Common myeloid progenitor, CD34-positive (primary cell): ENCODE measurements at regions of chr3 and their contacts with region 1.

Region 1: DNA sequence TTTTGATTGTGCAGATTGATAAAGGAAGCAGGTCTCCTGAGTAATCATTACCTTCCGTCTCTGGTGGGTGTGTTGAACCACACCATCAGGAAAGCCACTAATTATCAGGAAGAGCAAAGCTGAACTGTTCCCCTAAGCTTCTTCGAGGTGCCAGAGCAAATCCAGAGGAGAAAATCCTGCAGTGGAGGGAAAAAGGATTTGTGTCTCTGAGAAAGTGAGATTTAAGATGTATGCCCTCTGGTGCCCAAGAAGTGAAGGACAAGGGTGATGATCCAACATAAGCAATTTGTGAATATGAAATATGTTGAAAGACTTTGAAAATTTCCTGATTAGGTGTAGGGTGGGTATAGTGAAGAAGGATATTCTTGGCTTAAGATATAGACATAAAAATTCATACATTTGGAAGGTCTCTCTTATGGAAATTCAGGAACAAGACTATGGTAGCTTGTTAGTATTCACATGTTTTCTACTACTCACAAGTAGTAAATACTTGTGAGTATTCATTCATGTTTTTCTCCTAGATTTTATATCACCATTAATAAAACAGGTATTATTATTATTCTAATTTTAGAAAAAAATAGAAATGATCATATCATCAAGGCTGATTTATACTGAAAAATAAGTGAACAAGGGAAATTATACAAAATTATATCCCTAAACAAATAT is 34.8 kb downstream of the COMMD2 start:
- DNase-seq: peak; percentile 61 to 78 (median 72)
- H3K4me3 ChIP-seq: no peak overlapping the region
- H3K27ac ChIP-seq: no peak overlapping the region
- H3K4me1 ChIP-seq: no peaks in the 10 kb centered on the region
- H3K27me3 ChIP-seq: no peaks in the 10 kb centered on the region

Region 2: DNA sequence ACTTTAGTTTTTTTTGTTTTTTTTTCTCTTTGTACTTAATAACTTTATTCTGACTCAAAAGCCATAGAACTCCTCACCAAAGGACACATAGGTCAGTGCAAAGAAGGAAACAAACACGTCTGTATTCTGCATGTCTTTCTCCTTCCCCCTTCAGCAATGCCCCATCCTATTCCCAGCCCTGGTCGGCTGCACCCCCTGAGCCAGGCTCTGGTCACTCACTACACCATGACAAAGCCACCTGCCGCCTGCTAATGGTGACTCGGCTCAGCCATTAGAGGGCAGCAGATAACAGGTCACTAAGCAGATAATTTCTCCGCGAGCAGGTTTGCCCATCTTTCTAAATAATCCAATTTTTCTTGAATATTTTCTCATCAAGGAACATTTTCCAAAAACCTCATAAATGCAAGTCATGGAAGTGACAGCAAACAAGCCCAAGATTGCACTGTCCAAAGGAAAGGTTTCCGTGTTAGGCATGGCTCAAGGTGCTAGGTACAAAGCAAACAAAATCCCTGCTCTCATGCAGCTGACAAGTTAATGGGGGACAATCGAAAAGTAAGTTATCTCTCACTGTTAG is 205.2 kb before region 1 on chr3:
- CTCF ChIA-PET with region 1: interaction called, 17 read pairs
- POLR2A ChIA-PET with region 1: no interaction called
- DNase-seq: peak; percentile 55 to 69 (median 68)
- H3K4me3 ChIP-seq: peak overlapping the region in 1 of 7 experiments; percentile 26
- H3K27ac ChIP-seq: no peak overlapping the region
- H3K4me1 ChIP-seq: peaks cover 0 to 29% (median 23%) of the 10 kb centered on the region in 4 experiments
- H3K27me3 ChIP-seq: no peaks in the 10 kb centered on the region

Region 3: GRCh38 chr3:149566292-149566975 is 151.1 kb before region 1 on chr3:
- CTCF ChIA-PET with region 1: interaction called, 14 read pairs
- POLR2A ChIA-PET with region 1: no interaction called
- DNase-seq: no peak
- H3K4me3 ChIP-seq: no peak overlapping the region
- H3K27ac ChIP-seq: no peak overlapping the region
- H3K4me1 ChIP-seq: no peaks in the 10 kb centered on the region
- H3K27me3 ChIP-seq: peaks cover 0 to 2% (median 0%) of the 10 kb centered on the region in 5 experiments

Region 4: GRCh38 chr3:149686991-149687390 is 30.5 kb before region 1 on chr3:
- CTCF ChIA-PET with region 1: no interaction called
- POLR2A ChIA-PET with region 1: no interaction called
- DNase-seq: no peak
- H3K4me3 ChIP-seq: no peak overlapping the region
- H3K27ac ChIP-seq: no peak overlapping the region
- H3K4me1 ChIP-seq: no peaks in the 10 kb centered on the region
- H3K27me3 ChIP-seq: no peaks in the 10 kb centered on the region

Region 5: GRCh38 chr3:149706905-149707304 is 10.6 kb before region 1 on chr3:
- CTCF ChIA-PET with region 1: interaction called, 13 read pairs
- POLR2A ChIA-PET with region 1: no interaction called
- DNase-seq: no peak
- H3K4me3 ChIP-seq: no peak overlapping the region
- H3K27ac ChIP-seq: no peak overlapping the region
- H3K4me1 ChIP-seq: no peaks in the 10 kb centered on the region
- H3K27me3 ChIP-seq: peaks cover 0 to 2% (median 0%) of the 10 kb centered on the region in 5 experiments